Activated T-helper 1 cell treated with anti-CD3 and anti-CD28 coated beads, Interleukin-12 subunit alpha, Interleukin-12 subunit beta, Interleukin-2, Interleukin-4 antibody, amounts not matched to agents 30 ng/mL and 10 ng/mL and 1 ng/mL, durations not matched to agents 14 hours and 24 hours and 36 hours (primary cell): ENCODE measurements at regions of chr7 and their contacts with region 1.

Region 1: DNA sequence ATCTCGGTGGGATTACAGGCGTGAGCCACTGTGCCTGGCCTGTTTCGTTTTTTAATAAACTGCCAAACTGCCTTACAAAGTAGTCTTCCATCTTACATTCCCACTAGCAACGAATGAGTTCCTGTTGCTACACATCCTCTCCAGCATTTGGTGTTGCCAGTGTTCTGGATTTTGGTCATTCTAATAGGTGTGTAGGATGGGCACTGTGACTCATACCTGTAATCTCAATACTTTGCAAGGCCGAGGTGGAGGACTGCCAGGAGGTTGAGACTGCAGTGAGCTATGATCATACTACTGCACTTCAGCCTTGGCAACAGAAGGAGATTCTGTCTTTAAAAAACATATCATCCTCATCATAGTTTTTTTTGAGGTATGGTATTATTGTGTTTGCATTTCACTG is 21.4 kb upstream of the RSBN1L start:
- DNase-seq: no peak
- H3K4me3 Mint-ChIP-seq: no peak overlapping the region
- H3K27ac Mint-ChIP-seq: no peak overlapping the region
- H3K4me1 Mint-ChIP-seq: no peaks in the 10 kb centered on the region
- H3K27me3 Mint-ChIP-seq: no peaks in the 10 kb centered on the region

Region 2: GRCh38 chr7:77657427-77658224 is 17.3 kb before region 1 on chr7:
- intact Hi-C with region 1: no loop called
- DNase-seq: peak; percentile 2
- H3K4me3 Mint-ChIP-seq: no peak overlapping the region
- H3K27ac Mint-ChIP-seq: no peak overlapping the region
- H3K4me1 Mint-ChIP-seq: no peaks in the 10 kb centered on the region
- H3K27me3 Mint-ChIP-seq: no peaks in the 10 kb centered on the region

Region 3: DNA sequence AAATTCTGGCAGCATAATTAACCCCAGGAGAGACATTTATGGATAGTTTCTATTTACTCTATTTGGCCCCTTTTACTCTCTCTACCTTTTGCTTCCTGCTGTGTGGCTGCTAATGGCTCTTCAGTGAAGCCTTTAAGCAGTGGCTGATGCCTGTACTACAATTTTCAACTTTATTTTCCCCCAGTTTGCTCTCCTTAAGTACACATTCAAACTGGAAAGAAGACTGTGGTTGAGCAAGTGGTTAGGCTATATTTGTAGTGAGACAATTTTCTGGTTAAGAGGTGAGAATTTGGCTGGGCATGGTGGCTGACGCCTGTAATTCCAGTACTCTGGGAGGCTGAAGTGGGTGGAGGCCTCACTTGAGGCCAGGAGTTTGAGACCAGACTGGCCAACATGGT is 12.9 kb after region 1 on chr7:
- intact Hi-C with region 1: loop called (anchors 2 kb)
- DNase-seq: peak; percentile 1
- H3K4me3 Mint-ChIP-seq: peak overlapping the region; percentile 3
- H3K27ac Mint-ChIP-seq: peak overlapping the region; percentile 32
- H3K4me1 Mint-ChIP-seq: peaks cover 35% of the 10 kb centered on the region
- H3K27me3 Mint-ChIP-seq: no peaks in the 10 kb centered on the region